Calu3 (cell line): ENCODE measurements at regions of chr4 and their contacts with region 1.

Region 1: DNA sequence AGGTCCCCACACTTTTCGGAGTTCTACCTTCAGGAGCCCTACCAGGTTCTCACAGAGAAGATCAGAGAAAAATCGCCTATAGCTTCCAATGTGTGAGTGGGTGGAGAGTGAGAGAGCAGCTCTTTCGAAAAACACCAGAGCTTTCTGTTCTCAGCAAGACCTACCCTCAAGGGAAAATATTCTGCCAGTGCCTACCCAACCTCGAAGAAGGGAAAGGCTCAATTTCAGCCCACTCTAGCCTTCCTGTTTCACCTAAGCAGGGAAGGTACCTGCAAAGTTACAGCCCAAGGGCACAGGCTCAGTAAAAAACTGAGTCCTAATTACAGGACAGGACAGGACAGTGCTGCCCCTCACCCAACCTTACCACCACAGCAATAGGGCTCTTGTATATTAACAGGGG is 104.0 kb upstream of the WDR17 start:
- DNase-seq: no peak
- H3K4me3 Mint-ChIP-seq: no peak overlapping the region
- H3K27ac Mint-ChIP-seq: no peak overlapping the region
- H3K4me1 Mint-ChIP-seq: no peaks in the 10 kb centered on the region
- H3K27me3 Mint-ChIP-seq: no peaks in the 10 kb centered on the region
- CTCF ChIP-seq: no peak

Region 2: DNA sequence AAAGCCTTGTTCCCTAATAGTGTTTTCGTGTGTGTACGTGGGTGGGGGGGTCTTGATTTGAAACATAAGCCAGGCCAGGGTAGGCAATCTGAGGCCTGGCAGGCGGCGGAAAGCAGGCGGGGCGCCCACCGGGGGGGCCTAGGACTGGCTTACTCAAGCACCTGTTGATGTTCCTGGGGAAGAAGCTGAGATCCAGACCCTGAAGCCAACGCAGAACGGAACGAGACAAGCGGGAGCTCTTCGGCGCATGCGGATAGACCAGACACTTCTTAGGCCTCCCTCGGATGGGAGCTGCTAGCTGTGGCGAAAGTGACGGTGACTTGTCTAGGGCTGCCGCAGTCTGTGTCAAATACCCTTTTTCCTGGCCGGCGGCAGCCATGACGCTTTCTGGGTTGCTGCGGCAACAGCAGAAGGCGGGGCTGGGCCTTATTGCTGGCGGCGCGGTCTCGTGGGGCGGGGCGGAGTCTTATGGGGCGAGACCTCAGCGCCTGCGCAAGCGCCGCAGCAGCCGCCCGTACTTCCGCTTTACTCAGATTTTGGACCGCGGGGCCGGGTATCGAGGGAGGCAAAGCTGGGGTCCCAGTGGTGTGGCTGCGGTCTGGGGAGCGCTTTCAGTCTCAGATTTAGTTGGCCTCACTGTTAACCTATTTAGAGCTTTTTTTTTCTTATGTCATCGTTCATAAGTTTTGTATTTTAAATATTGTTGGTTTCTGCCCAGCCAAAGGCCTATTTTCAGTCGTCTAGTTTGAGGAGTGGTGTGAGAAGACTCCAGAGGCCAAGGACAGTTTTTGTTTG is 233.8 kb after region 1 on chr4 and contains the start of gene SPATA4:
- CTCF ChIA-PET with region 1: no interaction called
- intact Hi-C with region 1: no loop called
- DNase-seq: peak; percentile 90
- H3K4me3 Mint-ChIP-seq: peak within 1 kb of the TSS; percentile 80
- H3K27ac Mint-ChIP-seq: peak within 1 kb of the TSS; percentile 91
- H3K4me1 Mint-ChIP-seq: peaks cover 14% of the 10 kb centered on the region
- H3K27me3 Mint-ChIP-seq: peaks cover 7% of the 10 kb centered on the region
- CTCF ChIP-seq: no peak
- total RNA-seq, gene SPATA4: not detected in 2 replicates

Region 3: DNA sequence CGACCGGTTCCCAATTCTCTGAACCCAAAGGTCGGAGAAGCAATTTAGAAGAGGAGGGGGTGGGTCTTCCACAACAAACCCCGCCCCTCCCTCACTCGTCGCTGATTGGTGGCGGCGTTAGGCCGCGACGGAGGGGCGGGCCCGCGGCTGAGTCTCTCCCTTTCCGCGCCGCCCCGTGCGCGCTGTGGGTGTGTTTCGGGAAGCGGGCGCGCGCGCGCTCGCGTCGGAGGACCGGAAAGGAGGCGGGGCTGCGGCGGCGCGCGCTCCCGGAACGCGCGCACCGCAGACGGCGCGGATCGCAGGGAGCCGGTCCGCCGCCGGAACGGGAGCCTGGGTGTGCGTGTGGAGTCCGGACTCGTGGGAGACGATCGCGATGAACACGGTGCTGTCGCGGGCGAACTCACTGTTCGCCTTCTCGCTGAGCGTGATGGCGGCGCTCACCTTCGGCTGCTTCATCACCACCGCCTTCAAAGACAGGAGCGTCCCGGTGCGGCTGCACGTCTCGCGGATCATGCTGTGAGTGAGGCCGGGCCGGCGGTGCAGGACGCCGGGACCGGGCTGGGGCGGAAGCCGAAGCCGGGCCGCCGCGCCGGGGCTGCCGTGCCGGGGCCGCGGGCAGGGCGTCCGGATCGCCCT is 358.2 kb after region 1 on chr4 and contains the start of gene SPCS3:
- CTCF ChIA-PET with region 1: no interaction called
- intact Hi-C with region 1: loop called (anchors 10 kb)
- DNase-seq: peak; percentile 90
- H3K4me3 Mint-ChIP-seq: peak within 1 kb of the TSS; percentile 76
- H3K27ac Mint-ChIP-seq: peak within 1 kb of the TSS; percentile 88
- H3K4me1 Mint-ChIP-seq: no peaks in the 10 kb centered on the region
- H3K27me3 Mint-ChIP-seq: no peaks in the 10 kb centered on the region
- CTCF ChIP-seq: no peak
- total RNA-seq, gene SPCS3: 82.8 and 94.6 TPM in 2 replicates